ENCODE measurements at regions of chr5 and their contacts with region 1.

Region 1: GRCh38 chr5:178279725-178280438 is 47.3 kb upstream of the PHYKPL start:
- DNase-seq: peak; percentile 89
- H3K4me3 Mint-ChIP-seq: no peak overlapping the region
- H3K27ac Mint-ChIP-seq: no peak overlapping the region
- H3K4me1 Mint-ChIP-seq: peaks cover 5% of the 10 kb centered on the region
- H3K27me3 Mint-ChIP-seq: no peaks in the 10 kb centered on the region

Region 2: DNA sequence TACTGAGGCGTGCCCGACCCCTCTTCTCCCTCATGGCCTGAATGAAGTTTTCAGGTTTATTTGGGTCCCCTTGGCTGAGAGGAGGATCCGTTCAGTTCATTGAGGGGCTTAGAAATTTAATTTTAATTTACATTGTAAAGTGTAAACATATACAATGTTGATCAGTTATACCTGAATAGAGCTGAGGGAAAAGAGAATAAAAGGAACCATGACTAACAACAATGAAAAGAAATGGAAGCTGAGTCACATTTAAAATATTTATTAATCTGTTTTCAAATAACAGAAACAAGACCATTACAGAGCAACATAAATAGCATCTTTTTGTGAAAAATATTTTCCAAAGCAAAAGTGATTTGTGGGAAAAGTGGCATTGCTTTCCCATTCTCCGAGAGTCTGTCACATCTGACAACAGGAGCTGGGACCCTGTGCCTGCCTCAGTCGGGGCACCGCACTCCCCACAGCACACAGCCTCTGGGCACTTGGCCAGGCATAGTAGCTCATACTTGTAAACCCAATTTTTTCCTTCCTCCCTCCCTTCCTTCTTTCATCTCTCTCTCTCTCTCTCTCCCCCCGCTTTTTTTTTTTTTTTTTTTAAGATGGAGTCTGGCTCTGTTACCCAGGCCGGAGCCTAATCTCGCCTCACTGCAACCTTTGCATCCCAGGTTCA is 312.5 kb before region 1 on chr5:
- intact Hi-C with region 1: no loop called
- DNase-seq: no peak
- H3K4me3 Mint-ChIP-seq: no peak overlapping the region
- H3K27ac Mint-ChIP-seq: no peak overlapping the region
- H3K4me1 Mint-ChIP-seq: peaks cover 2% of the 10 kb centered on the region
- H3K27me3 Mint-ChIP-seq: peaks cover 24% of the 10 kb centered on the region

Region 3: DNA sequence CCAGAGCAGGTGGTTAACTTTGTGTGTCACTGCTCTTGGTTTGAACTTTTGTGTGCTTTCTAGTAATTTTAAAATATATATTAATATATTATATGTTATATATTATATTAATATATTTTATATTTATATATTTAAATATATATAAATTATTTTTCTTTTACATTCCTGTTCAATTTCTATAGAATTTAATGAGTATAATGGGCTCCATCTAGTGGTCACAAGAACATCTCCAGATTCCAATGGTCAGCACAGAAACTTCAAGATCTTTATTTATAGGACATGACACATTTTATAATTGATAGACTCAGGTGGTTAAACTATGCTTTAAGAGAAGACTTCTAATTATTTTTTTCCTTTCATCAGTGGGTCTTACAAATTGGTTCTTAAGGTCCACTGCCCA is 271.2 kb after region 1 on chr5:
- intact Hi-C with region 1: loop called (anchors 2 kb)
- DNase-seq: no peak
- H3K4me3 Mint-ChIP-seq: no peak overlapping the region
- H3K27ac Mint-ChIP-seq: no peak overlapping the region
- H3K4me1 Mint-ChIP-seq: no peaks in the 10 kb centered on the region
- H3K27me3 Mint-ChIP-seq: no peaks in the 10 kb centered on the region

Region 4: DNA sequence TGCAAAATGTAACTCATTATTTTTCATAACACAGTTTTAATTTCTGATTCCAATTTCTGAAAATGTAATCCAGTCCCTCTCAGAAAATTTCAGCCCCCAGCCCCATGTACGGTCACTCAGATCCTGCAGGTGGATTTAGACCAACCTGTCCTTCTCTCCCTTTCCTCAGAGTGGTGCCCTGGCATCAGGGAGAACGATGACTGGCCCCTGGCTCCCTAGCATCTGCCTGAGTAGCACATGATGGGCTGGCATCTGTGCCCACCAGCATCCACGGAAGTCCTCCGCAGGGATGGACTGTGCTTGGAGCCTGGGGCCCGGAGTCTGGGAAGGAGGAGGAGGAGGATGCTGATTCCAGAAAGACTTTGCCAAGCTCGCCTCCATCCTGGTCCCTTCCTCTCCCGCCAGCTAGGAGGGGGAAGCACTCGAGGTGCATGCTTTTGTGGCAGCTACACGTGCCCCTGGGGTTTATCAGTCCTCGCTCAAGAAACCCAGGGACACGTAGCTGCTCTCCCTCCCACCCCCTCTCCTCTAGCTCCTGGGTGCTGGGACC is 1216.1 kb after region 1 on chr5:
- intact Hi-C with region 1: loop called (anchors 10 kb)
- DNase-seq: no peak
- H3K4me3 Mint-ChIP-seq: no peak overlapping the region
- H3K27ac Mint-ChIP-seq: no peak overlapping the region
- H3K4me1 Mint-ChIP-seq: no peaks in the 10 kb centered on the region
- H3K27me3 Mint-ChIP-seq: no peaks in the 10 kb centered on the region